ENCODE measurements at regions of chr16 and their contacts with region 1.

Region 1: GRCh38 chr16:18024611-18025010 is 311.9 kb downstream of the NPIPA8 start:
- DNase-seq: no peak
- ATAC-seq: no peak
- H3K4me3 ChIP-seq: no peak overlapping the region
- H3K27ac ChIP-seq: no peak overlapping the region
- H3K4me1 ChIP-seq: no peaks in the 10 kb centered on the region
- H3K27me3 ChIP-seq: no peaks in the 10 kb centered on the region

Region 2: GRCh38 chr16:17313085-17313611 is 711.5 kb before region 1 on chr16:
- intact Hi-C with region 1: no loop called
- DNase-seq: peak; percentile 70 to 79
- ATAC-seq: peak; percentile 49
- H3K4me3 ChIP-seq: no peak overlapping the region
- H3K27ac ChIP-seq: peak overlapping the region; percentile 46 to 47
- H3K4me1 ChIP-seq: no peaks in the 10 kb centered on the region
- H3K27me3 ChIP-seq: no peaks in the 10 kb centered on the region

Region 3: DNA sequence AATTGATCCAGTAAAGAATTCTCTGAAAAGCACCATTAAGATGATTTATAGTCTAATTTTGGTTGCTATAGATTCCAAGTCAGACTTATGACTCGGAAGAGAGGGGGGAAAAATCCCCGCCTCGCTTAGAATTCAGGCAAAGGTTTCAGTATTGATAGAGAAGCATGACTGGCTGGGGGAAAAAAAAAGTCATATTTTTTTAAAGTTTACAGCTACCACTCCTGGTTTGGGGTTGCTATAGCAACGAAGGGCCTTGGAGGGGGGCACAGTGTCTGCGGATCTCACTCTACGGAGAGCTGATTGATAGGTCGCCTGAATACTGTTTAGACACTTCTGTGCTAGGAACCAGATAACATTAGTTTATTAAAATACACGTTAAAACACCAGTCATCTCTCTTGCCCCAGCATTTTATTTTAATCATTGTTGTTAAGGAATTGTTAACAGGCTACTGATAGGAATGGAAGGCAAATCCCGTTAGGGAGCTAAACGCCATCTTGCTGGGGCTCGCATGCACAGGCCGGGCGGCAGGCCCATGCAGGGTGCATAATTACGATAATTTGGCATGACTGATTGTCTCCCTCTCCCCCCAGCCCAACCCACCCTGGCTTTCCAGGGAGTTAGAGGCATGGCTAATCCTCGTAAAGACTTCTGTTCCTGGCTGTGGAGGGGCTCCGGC is 173.9 kb before region 1 on chr16:
- intact Hi-C with region 1: no loop called
- DNase-seq: no peak
- ATAC-seq: no peak
- H3K4me3 ChIP-seq: no peak overlapping the region
- H3K27ac ChIP-seq: no peak overlapping the region
- H3K4me1 ChIP-seq: no peaks in the 10 kb centered on the region
- H3K27me3 ChIP-seq: peaks cover 0 to 2% of the 10 kb centered on the region in 2 donors

Region 4: DNA sequence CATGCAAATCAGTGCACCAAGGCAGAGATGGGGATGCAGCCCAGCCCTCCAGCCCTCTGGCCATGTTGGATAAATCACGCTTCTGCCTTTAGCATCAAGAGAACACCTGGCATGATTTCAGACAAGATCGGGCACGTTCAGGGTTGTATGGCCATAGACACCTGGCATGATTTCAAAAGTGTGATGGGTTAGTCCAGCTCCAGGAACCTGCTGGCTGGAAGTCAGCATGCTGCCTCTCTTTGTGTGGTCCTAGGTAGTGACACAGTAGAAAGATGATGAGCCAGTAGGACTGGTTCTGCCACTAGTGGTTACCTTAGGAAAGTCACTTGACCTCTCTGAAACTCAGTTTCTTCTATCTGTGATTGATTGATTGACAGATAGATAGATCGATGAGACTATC is 15.0 kb before region 1 on chr16:
- intact Hi-C with region 1: loop called in 1 of 2 experiments (anchors 1 kb)
- DNase-seq: no peak
- ATAC-seq: no peak
- H3K4me3 ChIP-seq: no peak overlapping the region
- H3K27ac ChIP-seq: no peak overlapping the region
- H3K4me1 ChIP-seq: no peaks in the 10 kb centered on the region
- H3K27me3 ChIP-seq: no peaks in the 10 kb centered on the region

Measured in aorta (tissue), 5 donors.